A673 (cell line): ENCODE measurements at regions of chr6 and their contacts with region 1.

Region 1: GRCh38 chr6:154649721-154650120 is 83.5 kb upstream of the SCAF8 start:
- DNase-seq: no peak
- H3K4me3 ChIP-seq: no peak overlapping the region
- H3K27ac ChIP-seq: no peak overlapping the region
- H3K4me1 ChIP-seq: peaks cover 8% of the 10 kb centered on the region
- H3K27me3 ChIP-seq: no peaks in the 10 kb centered on the region
- CTCF ChIP-seq: no peak

Region 2: GRCh38 chr6:154510143-154510905 is 139.4 kb before region 1 on chr6 and contains the start of gene CNKSR3:
- CTCF ChIA-PET with region 1: no interaction called
- POLR2A ChIA-PET with region 1: no interaction called
- intact Hi-C with region 1: loop called (anchors 10 kb)
- DNase-seq: peak; percentile 99
- H3K4me3 ChIP-seq: peak within 1 kb of the TSS; percentile 71
- H3K27ac ChIP-seq: peak within 1 kb of the TSS; percentile 84
- H3K4me1 ChIP-seq: peaks cover 38% of the 10 kb centered on the region
- H3K27me3 ChIP-seq: no peaks in the 10 kb centered on the region
- CTCF ChIP-seq: no peak
- total RNA-seq, gene CNKSR3: 10.3 and 10.5 TPM in 2 replicates

Region 3: GRCh38 chr6:154661768-154662167 is 12.0 kb after region 1 on chr6:
- CTCF ChIA-PET with region 1: interaction called, 11 read pairs
- POLR2A ChIA-PET with region 1: no interaction called
- intact Hi-C with region 1: no loop called
- DNase-seq: peak; percentile 84
- H3K4me3 ChIP-seq: no peak overlapping the region
- H3K27ac ChIP-seq: no peak overlapping the region
- H3K4me1 ChIP-seq: peaks cover 14% of the 10 kb centered on the region
- H3K27me3 ChIP-seq: no peaks in the 10 kb centered on the region
- CTCF ChIP-seq: peak; percentile 49

Region 4: GRCh38 chr6:154738551-154738961 is 88.8 kb after region 1 on chr6:
- CTCF ChIA-PET with region 1: no interaction called
- POLR2A ChIA-PET with region 1: no interaction called
- intact Hi-C with region 1: no loop called
- DNase-seq: peak; percentile 27
- H3K4me3 ChIP-seq: no peak overlapping the region
- H3K27ac ChIP-seq: peak overlapping the region; percentile 4
- H3K4me1 ChIP-seq: peaks cover 14% of the 10 kb centered on the region
- H3K27me3 ChIP-seq: no peaks in the 10 kb centered on the region
- CTCF ChIP-seq: no peak